Thyroid gland (tissue), 4 donors: ENCODE measurements at regions of chr4 and their contacts with region 1.

Region 1: GRCh38 chr4:170138580-170139194 is 48.9 kb upstream of the AADAT start:
- DNase-seq: peak; percentile 69 to 76
- H3K4me3 ChIP-seq: no peak overlapping the region
- H3K27ac ChIP-seq: no peak overlapping the region
- H3K4me1 ChIP-seq: no peaks in the 10 kb centered on the region
- H3K27me3 ChIP-seq: no peaks in the 10 kb centered on the region
- CTCF ChIP-seq: peak in 5 of 6 experiments; percentile 42 to 77 (median 54)
- POLR2A ChIP-seq: no peak

Region 2: DNA sequence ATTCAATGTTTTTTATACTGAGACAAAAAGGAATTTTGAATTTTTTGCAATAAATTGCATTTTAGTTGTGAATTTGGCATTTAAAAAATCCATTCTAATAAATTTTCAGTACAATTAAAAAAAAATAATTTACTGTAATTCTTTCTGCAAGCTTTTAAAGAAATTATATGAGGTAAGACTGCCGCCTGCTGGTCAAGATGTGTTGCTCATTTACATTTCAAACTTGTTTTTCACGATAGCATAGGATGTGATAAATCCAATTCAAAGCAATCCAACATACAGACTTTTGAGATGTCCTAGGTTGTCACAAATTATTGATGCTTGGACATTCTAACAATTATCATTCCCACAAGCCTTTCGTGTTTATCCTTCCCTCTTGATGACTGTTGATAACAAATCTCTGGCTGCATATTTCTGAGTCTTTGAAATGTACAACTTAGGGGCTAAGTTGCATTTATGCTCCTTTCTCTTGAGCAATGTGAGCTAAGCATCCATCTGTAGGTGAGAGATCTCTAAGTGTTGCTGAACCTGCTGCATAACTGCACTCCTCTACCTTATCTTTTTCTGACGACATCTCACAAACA is 90.8 kb before region 1 on chr4:
- intact Hi-C with region 1: no loop called
- DNase-seq: peak; percentile 57 to 64
- H3K4me3 ChIP-seq: no peak overlapping the region
- H3K27ac ChIP-seq: no peak overlapping the region
- H3K4me1 ChIP-seq: no peaks in the 10 kb centered on the region
- H3K27me3 ChIP-seq: no peaks in the 10 kb centered on the region
- CTCF ChIP-seq: peak in 5 of 6 experiments; percentile 55 to 83 (median 76)
- POLR2A ChIP-seq: no peak

Region 3: DNA sequence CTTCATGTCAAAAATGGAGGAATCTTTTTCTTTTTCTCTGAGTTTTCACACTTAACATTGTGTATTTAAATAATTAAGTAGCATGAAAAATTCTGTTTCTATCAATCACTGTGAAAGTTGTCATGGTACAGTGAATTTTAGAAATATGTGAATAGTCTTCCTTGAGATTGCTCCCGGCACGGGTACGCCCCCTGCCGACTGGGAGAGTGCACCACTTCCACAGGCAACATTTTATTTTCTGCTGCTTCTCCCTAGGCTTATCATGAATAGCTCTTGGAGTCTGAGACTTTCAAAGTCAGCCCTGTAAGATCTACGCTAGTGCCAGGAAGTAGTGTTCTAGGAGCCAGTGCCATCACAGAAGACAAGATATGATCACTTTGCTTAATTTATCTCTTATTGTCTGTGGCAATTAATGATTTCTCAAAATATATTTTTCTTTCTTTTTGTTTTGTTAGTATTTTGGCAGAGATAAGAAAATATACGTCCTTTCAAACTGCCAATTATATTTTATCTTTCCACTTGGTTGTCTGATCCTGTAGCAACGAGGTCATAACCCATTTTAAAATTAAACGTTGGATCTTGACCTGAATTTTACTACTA is 714.8 kb after region 1 on chr4:
- intact Hi-C with region 1: loop called (anchors 10 kb)
- DNase-seq: peak; percentile 28 to 55
- H3K4me3 ChIP-seq: no peak overlapping the region
- H3K27ac ChIP-seq: no peak overlapping the region
- H3K4me1 ChIP-seq: no peaks in the 10 kb centered on the region
- H3K27me3 ChIP-seq: no peaks in the 10 kb centered on the region
- CTCF ChIP-seq: peak in 5 of 6 experiments; percentile 20 to 65 (median 38)
- POLR2A ChIP-seq: no peak